GM13976 (cell line): ENCODE measurements at regions of chrX and their contacts with region 1.

Region 1: DNA sequence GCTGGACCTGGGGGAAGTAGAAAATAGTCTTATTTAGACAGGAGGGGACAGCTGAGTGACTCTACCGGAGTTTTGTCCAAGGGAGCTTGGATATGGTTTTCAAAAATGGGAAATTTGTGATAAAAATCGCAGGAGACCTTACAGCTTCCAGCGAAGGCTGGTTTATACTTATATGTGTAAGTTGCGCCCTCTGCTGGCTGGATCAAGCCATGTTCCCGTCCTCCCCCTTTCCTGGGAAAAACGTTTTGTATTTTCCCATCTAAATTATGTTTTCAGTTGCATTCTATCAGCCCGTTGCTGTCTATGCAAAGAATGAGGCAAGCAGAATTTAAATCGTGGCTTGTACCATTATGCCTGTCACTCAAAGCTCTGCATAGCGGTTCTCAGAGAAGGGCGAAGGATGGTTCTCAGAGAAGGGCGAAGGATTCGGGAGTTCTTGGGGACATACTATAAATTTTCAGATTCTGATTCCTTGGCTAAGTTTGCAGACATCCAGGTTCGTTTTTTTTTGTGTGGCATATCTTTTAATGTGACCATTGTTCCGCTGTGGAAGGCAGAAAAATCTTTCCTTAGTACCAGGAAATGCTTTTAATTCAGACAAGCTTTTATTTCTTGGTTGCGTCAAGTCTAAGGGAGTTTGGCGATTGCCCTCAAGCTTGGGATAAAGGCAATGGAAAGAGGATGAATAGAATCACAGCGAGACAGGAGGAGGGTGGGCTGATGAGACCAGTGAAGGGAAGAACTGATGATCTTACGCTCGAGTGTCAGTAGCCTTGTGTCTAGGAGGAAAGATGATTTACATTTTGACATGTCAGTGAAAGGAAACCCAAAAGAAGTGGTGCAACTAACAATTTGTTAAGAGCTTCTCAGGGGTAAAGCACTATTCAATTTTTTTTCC is 128.5 kb upstream of the ARX start:
- DNase-seq: peak; percentile 21
- CTCF ChIP-seq: peak; percentile 59

Region 2: GRCh38 chrX:24732766-24733500 is 411.4 kb before region 1 on chrX:
- in situ Hi-C with region 1: loop called (anchors 25 kb)
- DNase-seq: no peak
- CTCF ChIP-seq: no peak